ENCODE measurements at regions of chr15 and their contacts with region 1.

Region 1: DNA sequence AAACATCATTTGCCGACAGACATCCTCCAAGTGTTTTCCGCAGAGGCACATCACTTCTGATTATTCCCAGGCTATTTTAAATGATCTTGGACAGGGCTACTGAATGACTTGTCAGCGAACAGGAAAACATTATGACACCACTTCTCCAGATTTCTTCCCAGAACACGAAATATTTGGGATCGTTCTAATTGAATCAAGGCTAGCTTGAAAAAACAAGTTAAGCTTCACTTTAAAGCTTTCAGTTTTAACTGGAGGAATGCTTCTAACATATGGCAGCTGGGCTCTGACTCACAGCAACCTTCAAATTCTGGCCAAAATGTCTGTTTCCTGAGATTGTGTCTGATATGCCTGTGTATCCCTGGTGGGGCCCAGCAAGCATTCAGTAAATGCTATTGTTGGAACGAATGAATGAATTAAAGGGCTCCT is 127.0 kb upstream of the ICE2 start:
- DNase-seq: peak; percentile 99
- H3K4me3 ChIP-seq: peak overlapping the region in 2 of 3 experiments; percentile 60 to 77
- H3K27ac ChIP-seq: peak overlapping the region; percentile 97
- H3K4me1 ChIP-seq: peaks cover 27% of the 10 kb centered on the region
- H3K27me3 ChIP-seq: no peaks in the 10 kb centered on the region
- CTCF ChIP-seq: no peak
- POLR2A ChIP-seq: peak; percentile 29

Region 2: GRCh38 chr15:60374628-60375081 is 231.2 kb before region 1 on chr15:
- CTCF ChIA-PET with region 1: no interaction called
- POLR2A ChIA-PET with region 1: no interaction called
- dilution Hi-C with region 1: no loop called
- intact Hi-C with region 1: loop called (anchors 2 kb)
- DNase-seq: peak; percentile 98
- H3K4me3 ChIP-seq: no peak overlapping the region
- H3K27ac ChIP-seq: peak overlapping the region; percentile 98
- H3K4me1 ChIP-seq: peaks cover 85% of the 10 kb centered on the region
- H3K27me3 ChIP-seq: no peaks in the 10 kb centered on the region
- CTCF ChIP-seq: no peak
- POLR2A ChIP-seq: peak; percentile 72

Region 3: DNA sequence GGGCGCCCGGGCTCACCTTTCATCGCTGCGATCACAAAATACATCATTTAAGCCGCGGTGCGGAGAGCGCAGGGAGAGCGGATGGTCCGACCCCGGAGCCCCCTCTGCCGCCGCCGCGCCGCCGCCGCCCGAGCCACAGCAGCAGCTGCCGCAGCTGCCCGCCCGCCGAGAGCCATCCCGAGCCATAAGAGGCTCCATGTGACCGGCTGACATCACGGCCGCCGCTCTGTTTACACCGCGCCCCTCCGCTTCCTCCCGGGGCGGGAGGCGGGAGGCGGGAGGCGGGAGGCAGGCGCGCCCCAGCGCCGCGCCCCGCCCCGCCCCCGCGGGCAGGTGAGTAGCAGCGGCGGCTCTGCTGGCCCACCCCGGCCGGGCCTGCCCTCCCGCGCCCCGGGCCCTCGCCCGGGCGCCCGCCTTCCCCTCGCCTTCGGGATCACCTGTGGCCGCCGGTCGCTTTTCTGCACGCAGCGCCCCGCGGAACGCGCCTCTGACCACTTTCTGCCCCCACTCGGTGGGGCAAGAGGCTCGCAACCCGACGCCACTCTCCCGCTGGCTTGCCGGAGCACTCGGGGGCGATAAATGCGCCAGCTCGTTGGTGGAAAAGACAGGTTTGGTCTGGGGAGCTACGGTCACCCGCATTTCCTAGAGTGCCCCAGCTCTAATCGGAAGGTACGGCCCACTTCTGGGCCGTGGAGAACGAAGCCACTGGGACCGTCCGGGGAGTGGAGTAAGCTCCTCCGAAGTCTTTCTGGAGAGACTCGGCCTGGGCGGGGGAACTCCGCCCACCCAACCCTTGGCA is 13.3 kb before region 1 on chr15:
- CTCF ChIA-PET with region 1: interaction called, 26 read pairs
- POLR2A ChIA-PET with region 1: interaction called, 9 read pairs
- dilution Hi-C with region 1: no loop called
- intact Hi-C with region 1: loop called (anchors 1 kb)
- DNase-seq: peak; percentile 74
- H3K4me3 ChIP-seq: peak overlapping the region; percentile 33 to 83 (median 49)
- H3K27ac ChIP-seq: peak overlapping the region; percentile 2
- H3K4me1 ChIP-seq: peaks cover 14% of the 10 kb centered on the region
- H3K27me3 ChIP-seq: no peaks in the 10 kb centered on the region
- CTCF ChIP-seq: peak; percentile 23 to 49
- POLR2A ChIP-seq: no peak

Region 4: DNA sequence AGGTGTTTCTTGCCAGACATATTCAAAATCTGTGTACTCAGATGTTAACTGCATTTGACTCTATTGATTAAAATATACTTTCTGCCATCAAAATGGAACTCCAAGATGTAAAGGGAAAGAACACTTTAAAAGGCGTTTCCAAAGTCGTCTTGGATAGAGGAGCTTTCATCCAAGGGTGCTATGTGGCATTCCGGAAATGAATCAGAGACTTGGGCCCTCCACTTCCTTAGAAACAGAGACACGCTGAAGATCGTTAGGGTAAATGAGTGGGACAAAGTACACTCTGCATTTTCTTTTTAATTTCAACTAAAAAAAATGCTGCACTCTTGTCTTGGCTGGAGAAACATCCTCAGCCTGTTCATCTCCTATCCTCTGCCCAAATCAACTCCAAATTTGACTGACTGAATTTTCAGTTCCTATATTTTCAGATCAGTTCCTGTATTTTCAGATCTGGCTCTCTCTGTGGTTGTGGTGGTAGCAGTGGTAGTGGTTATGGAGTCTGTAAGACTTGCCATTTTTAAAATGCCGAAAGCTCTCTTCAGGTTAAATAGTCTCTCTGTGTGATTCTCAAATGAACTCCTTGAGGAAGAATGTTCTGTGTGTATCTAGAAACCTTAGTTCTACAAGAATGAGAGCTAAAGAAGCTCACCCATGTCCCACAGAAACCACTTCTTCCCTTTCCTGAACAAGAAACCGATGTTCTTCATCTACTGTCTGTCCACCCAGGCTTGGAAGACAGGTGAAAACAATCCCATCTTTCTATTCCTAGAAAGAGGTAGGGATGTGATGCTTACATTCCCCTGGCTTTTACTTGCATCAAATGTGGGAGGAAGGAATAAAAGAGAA is 29.8 kb after region 1 on chr15:
- CTCF ChIA-PET with region 1: interaction called, 5 read pairs
- POLR2A ChIA-PET with region 1: interaction called, 4 read pairs
- dilution Hi-C with region 1: no loop called
- intact Hi-C with region 1: loop called (anchors 1 kb)
- DNase-seq: peak; percentile 69
- H3K4me3 ChIP-seq: peak overlapping the region in 1 of 3 experiments; percentile 10
- H3K27ac ChIP-seq: peak overlapping the region; percentile 93
- H3K4me1 ChIP-seq: peaks cover 17% of the 10 kb centered on the region
- H3K27me3 ChIP-seq: no peaks in the 10 kb centered on the region
- CTCF ChIP-seq: no peak
- POLR2A ChIP-seq: no peak

Region 5: GRCh38 chr15:60673918-60674558 is 68.1 kb after region 1 on chr15:
- CTCF ChIA-PET with region 1: no interaction called
- POLR2A ChIA-PET with region 1: no interaction called
- dilution Hi-C with region 1: no loop called
- intact Hi-C with region 1: loop called (anchors 1 kb)
- DNase-seq: peak; percentile 97
- H3K4me3 ChIP-seq: no peak overlapping the region
- H3K27ac ChIP-seq: peak overlapping the region; percentile 68
- H3K4me1 ChIP-seq: peaks cover 9% of the 10 kb centered on the region
- H3K27me3 ChIP-seq: no peaks in the 10 kb centered on the region
- CTCF ChIP-seq: no peak
- POLR2A ChIP-seq: no peak

Region 6: GRCh38 chr15:60751985-60752952 is 146.4 kb after region 1 on chr15:
- CTCF ChIA-PET with region 1: no interaction called
- POLR2A ChIA-PET with region 1: no interaction called
- dilution Hi-C with region 1: no loop called
- intact Hi-C with region 1: loop called (anchors 1 kb)
- DNase-seq: peak; percentile 88
- H3K4me3 ChIP-seq: peak overlapping the region in 2 of 3 experiments; percentile 6 to 47
- H3K27ac ChIP-seq: peak overlapping the region; percentile 65
- H3K4me1 ChIP-seq: peaks cover 22% of the 10 kb centered on the region
- H3K27me3 ChIP-seq: no peaks in the 10 kb centered on the region
- CTCF ChIP-seq: no peak
- POLR2A ChIP-seq: no peak

Region 7: GRCh38 chr15:61034678-61035291 is 428.9 kb after region 1 on chr15:
- CTCF ChIA-PET with region 1: interaction called, 3 read pairs
- POLR2A ChIA-PET with region 1: no interaction called
- dilution Hi-C with region 1: no loop called
- intact Hi-C with region 1: loop called (anchors 1 kb)
- DNase-seq: peak; percentile 92
- H3K4me3 ChIP-seq: peak overlapping the region in 1 of 3 experiments; percentile 52
- H3K27ac ChIP-seq: peak overlapping the region; percentile 95
- H3K4me1 ChIP-seq: peaks cover 61% of the 10 kb centered on the region
- H3K27me3 ChIP-seq: no peaks in the 10 kb centered on the region
- CTCF ChIP-seq: no peak
- POLR2A ChIP-seq: no peak